Mammary epithelial cell (primary cell): ENCODE measurements at regions of chr5 and their contacts with region 1.

Region 1: GRCh38 chr5:56270568-56271392 is 37.6 kb upstream of the ANKRD55 start:
- DNase-seq: peak; percentile 71
- H3K4me3 ChIP-seq: no peak overlapping the region
- H3K27ac ChIP-seq: no peak overlapping the region
- H3K4me1 ChIP-seq: peaks cover 13% of the 10 kb centered on the region
- H3K27me3 ChIP-seq: no peaks in the 10 kb centered on the region
- CTCF ChIP-seq: peak; percentile 99 to 100

Region 2: DNA sequence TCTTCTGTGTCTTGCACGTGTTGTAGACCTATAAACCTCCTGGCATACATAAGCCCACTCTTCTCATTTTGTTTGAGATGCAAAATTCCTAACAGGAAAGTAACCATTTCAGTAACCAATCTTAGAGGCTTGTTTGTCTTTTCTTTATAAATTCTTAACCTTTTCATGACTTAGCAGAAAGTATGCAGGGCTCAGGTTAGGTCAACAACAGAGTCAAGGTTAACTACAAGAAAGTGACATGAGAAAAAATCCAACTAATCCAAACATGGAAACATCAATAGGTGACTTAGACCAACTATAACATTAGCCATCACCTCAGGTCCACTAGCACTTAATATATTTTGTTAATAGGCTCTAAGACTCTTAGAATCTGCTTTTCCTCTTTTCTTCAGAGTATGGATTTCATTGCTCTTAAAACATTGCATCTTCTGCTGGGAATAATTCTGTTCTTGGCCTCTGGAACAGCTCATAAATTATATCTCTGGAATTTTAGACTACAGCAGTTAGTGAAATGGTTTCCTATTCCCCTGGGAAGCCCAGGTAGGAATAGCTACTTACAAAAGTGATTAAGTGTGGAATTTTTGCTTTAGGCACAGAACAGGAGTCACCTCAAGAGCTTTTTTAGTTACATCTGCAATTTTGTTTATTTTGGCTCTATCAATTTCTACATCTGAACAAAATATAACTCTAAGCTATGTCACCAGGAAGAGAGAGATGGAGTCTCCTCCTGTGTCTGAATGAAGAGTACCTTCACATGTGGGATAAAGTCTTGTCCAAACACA is 117.6 kb after region 1 on chr5:
- CTCF ChIA-PET with region 1: no interaction called
- dilution Hi-C with region 1: no loop called
- in situ Hi-C with region 1: no loop called
- intact Hi-C with region 1: loop called (anchors 1 kb)
- DNase-seq: no peak
- H3K4me3 ChIP-seq: no peak overlapping the region
- H3K27ac ChIP-seq: no peak overlapping the region
- H3K4me1 ChIP-seq: no peaks in the 10 kb centered on the region
- H3K27me3 ChIP-seq: no peaks in the 10 kb centered on the region
- CTCF ChIP-seq: no peak

Region 3: DNA sequence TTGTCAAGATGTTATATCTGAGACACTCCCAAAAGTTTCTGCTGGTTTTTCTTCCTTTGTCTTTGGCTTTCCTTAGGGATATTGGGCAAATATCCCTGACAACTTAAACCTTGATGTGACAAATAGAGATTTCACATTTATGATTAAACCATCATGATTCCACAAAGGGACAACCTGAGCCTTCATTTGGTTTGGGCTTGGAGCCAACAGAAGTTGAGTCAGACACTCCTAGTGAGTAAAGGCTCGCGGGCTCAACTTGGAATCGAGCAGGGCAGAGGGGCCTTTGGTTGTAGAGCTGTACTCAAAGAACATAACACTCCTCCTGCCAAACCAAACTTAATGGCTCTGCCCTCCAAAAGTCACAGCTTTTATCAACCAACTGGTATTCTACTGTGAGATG is 254.3 kb after region 1 on chr5:
- CTCF ChIA-PET with region 1: no interaction called
- dilution Hi-C with region 1: no loop called
- in situ Hi-C with region 1: no loop called
- intact Hi-C with region 1: loop called (anchors 5 kb)
- DNase-seq: peak; percentile 81
- H3K4me3 ChIP-seq: no peak overlapping the region
- H3K27ac ChIP-seq: no peak overlapping the region
- H3K4me1 ChIP-seq: peaks cover 43% of the 10 kb centered on the region
- H3K27me3 ChIP-seq: no peaks in the 10 kb centered on the region
- CTCF ChIP-seq: no peak

Region 4: GRCh38 chr5:56814963-56815658 is 544.3 kb after region 1 on chr5 and contains the start of gene MAP3K1:
- CTCF ChIA-PET with region 1: interaction called, 3 read pairs
- dilution Hi-C with region 1: loop called (anchors 25 kb)
- in situ Hi-C with region 1: no loop called
- intact Hi-C with region 1: loop called (anchors 1 kb)
- DNase-seq: peak; percentile 80
- H3K4me3 ChIP-seq: peak within 1 kb of the TSS; percentile 80 to 89 (median 83)
- H3K27ac ChIP-seq: peak within 1 kb of the TSS; percentile 61
- H3K4me1 ChIP-seq: peaks cover 13% of the 10 kb centered on the region
- H3K27me3 ChIP-seq: no peaks in the 10 kb centered on the region
- CTCF ChIP-seq: peak in 1 of 2 donors; percentile 36
- total RNA-seq, gene MAP3K1: 10.0 to 18.7 TPM

Region 5: GRCh38 chr5:57082441-57083067 is 811.8 kb after region 1 on chr5:
- CTCF ChIA-PET with region 1: no interaction called
- dilution Hi-C with region 1: no loop called
- in situ Hi-C with region 1: no loop called
- intact Hi-C with region 1: loop called (anchors 1 kb)
- DNase-seq: peak; percentile 35
- H3K4me3 ChIP-seq: no peak overlapping the region
- H3K27ac ChIP-seq: no peak overlapping the region
- H3K4me1 ChIP-seq: no peaks in the 10 kb centered on the region
- H3K27me3 ChIP-seq: no peaks in the 10 kb centered on the region
- CTCF ChIP-seq: peak; percentile 20 to 67

Region 6: GRCh38 chr5:57221049-57221568 is 950.3 kb after region 1 on chr5:
- CTCF ChIA-PET with region 1: no interaction called
- dilution Hi-C with region 1: no loop called
- in situ Hi-C with region 1: no loop called
- intact Hi-C with region 1: loop called (anchors 5 kb)
- DNase-seq: peak; percentile 37
- H3K4me3 ChIP-seq: no peak overlapping the region
- H3K27ac ChIP-seq: no peak overlapping the region
- H3K4me1 ChIP-seq: peaks cover 5% of the 10 kb centered on the region
- H3K27me3 ChIP-seq: no peaks in the 10 kb centered on the region
- CTCF ChIP-seq: peak; percentile 70 to 76